Panc1 (cell line): ENCODE measurements at regions of chr3 and their contacts with region 1.

Region 1: GRCh38 chr3:180912304-180913296 is at the start of gene FXR1:
- DNase-seq: peak; percentile 74
- ATAC-seq: peak; percentile 99
- H3K4me3 ChIP-seq: peak within 1 kb of the TSS; percentile 89 to 92
- H3K27ac ChIP-seq: peak within 1 kb of the TSS; percentile 97
- H3K4me1 ChIP-seq: peaks cover 26% of the 10 kb centered on the region
- H3K27me3 ChIP-seq: no peaks in the 10 kb centered on the region
- CTCF ChIP-seq: peak; percentile 86
- total RNA-seq, gene FXR1: 180 TPM

Region 2: DNA sequence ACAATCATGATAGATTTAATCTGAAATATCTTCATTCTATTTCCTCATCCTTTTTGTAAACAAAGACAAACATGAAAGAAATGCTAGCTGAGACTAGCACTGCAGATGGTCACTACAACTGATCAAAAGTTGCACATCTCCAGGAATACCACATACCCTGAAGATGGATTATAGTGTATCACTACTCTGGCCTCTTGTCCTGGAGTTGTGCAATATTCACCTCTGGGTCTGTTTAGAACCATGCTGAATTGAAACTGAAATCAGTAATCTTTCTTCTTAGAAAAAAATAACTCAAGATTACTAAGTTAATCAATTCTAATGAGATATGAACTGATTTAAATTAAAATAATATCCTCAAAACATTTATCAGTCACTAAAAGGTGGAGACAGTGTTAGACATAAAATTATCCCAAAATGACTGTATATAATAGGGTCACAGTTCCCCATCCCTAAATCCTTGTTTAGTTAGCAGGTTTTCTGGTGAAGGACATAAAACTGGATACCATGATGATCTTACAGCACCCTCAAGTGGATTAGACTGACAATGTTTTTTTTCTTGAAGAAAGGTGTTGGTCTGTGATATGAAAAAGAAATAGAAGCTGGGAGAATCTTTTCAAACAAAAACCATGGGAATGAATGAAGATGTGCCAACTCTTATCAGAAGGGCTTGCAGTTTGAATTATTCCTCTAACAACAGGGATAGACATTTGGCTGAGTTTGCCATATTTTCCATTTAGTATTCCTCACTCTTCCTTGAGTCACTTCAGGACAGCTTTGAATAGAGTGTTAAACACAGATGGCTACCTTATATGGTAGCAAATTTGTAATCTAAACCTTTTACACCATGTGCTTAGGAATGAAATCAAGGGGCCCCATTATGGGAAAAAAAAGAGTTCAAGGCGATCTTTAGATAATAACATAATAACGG is 317.7 kb before region 1 on chr3:
- CTCF ChIA-PET with region 1: no interaction called
- POLR2A ChIA-PET with region 1: no interaction called
- in situ Hi-C with region 1: no loop called
- intact Hi-C with region 1: no loop called
- DNase-seq: peak; percentile 53
- ATAC-seq: peak; percentile 87
- H3K4me3 ChIP-seq: no peak overlapping the region
- H3K27ac ChIP-seq: no peak overlapping the region
- H3K4me1 ChIP-seq: no peaks in the 10 kb centered on the region
- H3K27me3 ChIP-seq: no peaks in the 10 kb centered on the region
- CTCF ChIP-seq: peak; percentile 76; the same call in 1 of the 2 replicates

Region 3: GRCh38 chr3:180657094-180657493 is 255.5 kb before region 1 on chr3:
- CTCF ChIA-PET with region 1: no interaction called
- POLR2A ChIA-PET with region 1: no interaction called
- in situ Hi-C with region 1: no loop called
- intact Hi-C with region 1: no loop called
- DNase-seq: no peak
- ATAC-seq: no peak
- H3K4me3 ChIP-seq: peak overlapping the region in 1 of 2 experiments; percentile 14; a peak in 1 of 4 replicates
- H3K27ac ChIP-seq: no peak overlapping the region
- H3K4me1 ChIP-seq: no peaks in the 10 kb centered on the region
- H3K27me3 ChIP-seq: no peaks in the 10 kb centered on the region
- CTCF ChIP-seq: no peak

Region 4: GRCh38 chr3:180875124-180875698 is 37.4 kb before region 1 on chr3:
- CTCF ChIA-PET with region 1: no interaction called
- POLR2A ChIA-PET with region 1: no interaction called
- in situ Hi-C with region 1: no loop called
- intact Hi-C with region 1: loop called (anchors 1 kb)
- DNase-seq: no peak
- ATAC-seq: no peak
- H3K4me3 ChIP-seq: no peak overlapping the region
- H3K27ac ChIP-seq: no peak overlapping the region
- H3K4me1 ChIP-seq: no peaks in the 10 kb centered on the region
- H3K27me3 ChIP-seq: no peaks in the 10 kb centered on the region
- CTCF ChIP-seq: no peak

Region 5: DNA sequence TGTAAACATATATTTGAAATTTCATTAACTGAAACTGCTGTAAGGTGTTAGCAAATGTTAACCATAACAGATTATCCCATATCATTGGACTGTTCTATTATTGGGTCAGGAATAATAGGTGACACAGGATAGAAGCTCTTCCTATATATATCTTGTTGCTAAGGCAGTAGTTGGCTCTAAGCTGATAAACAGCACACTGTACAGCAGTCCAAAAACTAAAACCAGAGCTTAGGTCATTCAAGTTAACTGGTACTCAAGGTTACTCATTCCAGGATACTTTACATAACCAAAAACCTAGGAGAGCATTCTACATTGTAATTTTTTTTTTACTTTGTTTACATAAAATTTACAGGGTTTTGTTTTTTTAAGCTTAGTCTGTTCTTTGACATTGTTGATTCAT is 68.0 kb after region 1 on chr3:
- CTCF ChIA-PET with region 1: no interaction called
- POLR2A ChIA-PET with region 1: no interaction called
- in situ Hi-C with region 1: no loop called
- intact Hi-C with region 1: no loop called
- DNase-seq: no peak
- ATAC-seq: no peak
- H3K4me3 ChIP-seq: no peak overlapping the region
- H3K27ac ChIP-seq: no peak overlapping the region
- H3K4me1 ChIP-seq: no peaks in the 10 kb centered on the region
- H3K27me3 ChIP-seq: no peaks in the 10 kb centered on the region
- CTCF ChIP-seq: no peak

Region 6: DNA sequence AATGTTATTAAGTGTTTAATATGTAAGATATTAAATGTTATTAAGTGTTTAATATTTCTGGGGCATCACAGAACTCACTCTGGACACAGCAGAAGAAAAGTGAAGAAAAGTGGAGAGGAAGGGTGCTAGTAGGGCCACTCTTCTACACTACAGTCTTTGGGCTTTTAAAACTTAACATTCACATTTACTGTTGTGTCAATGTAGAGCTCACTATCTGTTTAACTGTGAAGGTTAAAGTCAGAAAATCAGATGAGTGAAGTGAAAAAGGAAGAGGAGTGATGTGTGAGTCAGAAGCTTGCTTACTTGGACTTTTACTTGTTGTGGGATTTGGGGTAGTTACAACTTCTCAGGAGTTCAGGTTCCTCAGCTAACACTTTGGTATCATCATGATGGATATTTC is 222.3 kb after region 1 on chr3:
- CTCF ChIA-PET with region 1: no interaction called
- POLR2A ChIA-PET with region 1: no interaction called
- in situ Hi-C with region 1: no loop called
- intact Hi-C with region 1: no loop called
- DNase-seq: no peak
- ATAC-seq: no peak
- H3K4me3 ChIP-seq: no peak overlapping the region
- H3K27ac ChIP-seq: no peak overlapping the region
- H3K4me1 ChIP-seq: no peaks in the 10 kb centered on the region
- H3K27me3 ChIP-seq: no peaks in the 10 kb centered on the region
- CTCF ChIP-seq: no peak